ENCODE measurements at regions of chr12 and their contacts with region 1.

Region 1: GRCh38 chr12:94074980-94075928 is 73.1 kb upstream of the PLXNC1 start:
- DNase-seq: peak; percentile 28
- H3K4me3 ChIP-seq: no peak overlapping the region
- H3K27ac ChIP-seq: no peak overlapping the region
- H3K4me1 ChIP-seq: no peaks in the 10 kb centered on the region
- H3K27me3 ChIP-seq: peaks cover 8 to 9% of the 10 kb centered on the region in 2 experiments
- CTCF ChIP-seq: peak; percentile 43 to 46
- POLR2A ChIP-seq: no peak

Region 2: DNA sequence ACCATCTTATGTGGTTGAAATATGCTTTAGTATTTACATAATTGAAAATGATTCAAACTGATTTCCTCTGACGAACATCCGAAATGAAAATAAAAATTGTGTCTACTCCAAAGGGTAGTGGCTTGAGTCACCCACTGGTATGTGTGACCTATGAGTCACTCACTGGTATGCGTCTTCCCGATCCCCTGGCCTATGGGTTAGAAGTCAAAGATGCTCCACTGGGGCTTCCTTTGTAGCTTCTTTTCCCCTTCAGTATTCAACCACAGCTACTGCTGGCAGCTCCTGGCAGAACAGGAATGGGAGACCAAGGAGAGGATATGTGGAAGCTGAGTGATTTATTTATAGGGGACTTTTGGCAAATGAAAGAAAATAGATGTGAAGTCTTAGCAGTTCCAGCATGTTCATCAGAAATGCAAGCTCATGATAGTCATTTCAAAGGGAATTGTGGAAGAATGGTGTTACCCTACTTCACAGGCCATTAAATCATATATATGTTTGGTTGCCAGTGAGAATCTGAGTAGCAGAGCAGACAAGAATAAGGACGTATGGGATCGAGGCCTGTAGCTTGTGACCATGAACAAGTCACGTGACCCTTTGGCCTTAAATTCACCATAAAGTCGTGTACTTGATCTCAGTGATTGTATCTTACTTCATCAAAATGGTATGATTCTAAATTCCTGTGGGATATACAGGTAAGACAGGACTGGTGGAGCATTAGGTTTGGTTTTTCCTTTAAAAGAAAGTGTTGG is 289.8 kb before region 1 on chr12:
- CTCF ChIA-PET with region 1: interaction called, 10 read pairs
- POLR2A ChIA-PET with region 1: no interaction called
- dilution Hi-C with region 1: no loop called
- intact Hi-C with region 1: no loop called
- DNase-seq: peak; percentile 90
- H3K4me3 ChIP-seq: no peak overlapping the region
- H3K27ac ChIP-seq: peak overlapping the region; percentile 99
- H3K4me1 ChIP-seq: peaks cover 44% of the 10 kb centered on the region
- H3K27me3 ChIP-seq: no peaks in the 10 kb centered on the region
- CTCF ChIP-seq: no peak
- POLR2A ChIP-seq: peak; percentile 36

Measured in endothelial cell of umbilical vein (primary cell).